ENCODE measurements at regions of chr1 and their contacts with region 1.

Region 1: GRCh38 chr1:182839209-182840065 is at the start of gene DHX9:
- DNase-seq: peak; percentile 55 to 96
- H3K4me3 ChIP-seq: peak within 1 kb of the TSS; percentile 75 to 95
- H3K27ac ChIP-seq: peak within 1 kb of the TSS; percentile 90 to 91
- H3K4me1 ChIP-seq: peaks cover 0 to 10% of the 10 kb centered on the region in 2 donors
- H3K27me3 ChIP-seq: no peaks in the 10 kb centered on the region
- CTCF ChIP-seq: peak in 1 of 3 experiments; percentile 20
- total RNA-seq, gene DHX9: 52.8 TPM

Region 2: DNA sequence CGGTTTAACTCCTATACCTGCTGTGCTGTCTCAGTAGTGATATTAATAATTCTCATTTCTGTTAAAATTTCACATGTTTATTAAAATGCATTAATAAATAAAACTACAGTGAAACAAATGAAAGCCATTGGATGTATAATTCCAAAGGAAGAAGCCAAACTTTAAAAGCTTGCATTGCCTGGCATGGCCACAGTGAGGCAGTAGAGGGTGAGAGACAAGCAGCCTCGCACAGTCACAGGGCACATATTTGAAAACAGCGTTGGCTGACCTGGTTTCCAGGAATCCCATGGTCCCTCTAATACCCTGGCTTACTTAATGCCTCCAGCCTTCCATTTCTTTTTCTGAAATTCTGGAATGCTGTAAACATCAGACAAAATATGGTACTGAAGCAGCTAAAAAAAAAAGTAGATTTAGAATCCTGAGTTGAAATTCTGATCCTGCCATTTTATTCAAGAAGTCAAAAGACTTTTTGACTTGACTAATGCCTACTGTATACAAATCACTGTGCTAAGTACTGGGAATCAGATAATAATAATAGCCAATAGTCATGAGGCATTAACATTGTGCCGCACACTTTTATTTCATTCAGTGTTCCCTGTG is 243.7 kb before region 1 on chr1:
- intact Hi-C with region 1: loop called (anchors 2 kb)
- DNase-seq: peak; percentile 19 to 88
- H3K4me3 ChIP-seq: no peak overlapping the region
- H3K27ac ChIP-seq: peak overlapping the region; percentile 25 to 38
- H3K4me1 ChIP-seq: peaks cover 0 to 4% of the 10 kb centered on the region in 2 donors
- H3K27me3 ChIP-seq: no peaks in the 10 kb centered on the region
- CTCF ChIP-seq: peak; percentile 66 to 86 (median 83)

Region 3: DNA sequence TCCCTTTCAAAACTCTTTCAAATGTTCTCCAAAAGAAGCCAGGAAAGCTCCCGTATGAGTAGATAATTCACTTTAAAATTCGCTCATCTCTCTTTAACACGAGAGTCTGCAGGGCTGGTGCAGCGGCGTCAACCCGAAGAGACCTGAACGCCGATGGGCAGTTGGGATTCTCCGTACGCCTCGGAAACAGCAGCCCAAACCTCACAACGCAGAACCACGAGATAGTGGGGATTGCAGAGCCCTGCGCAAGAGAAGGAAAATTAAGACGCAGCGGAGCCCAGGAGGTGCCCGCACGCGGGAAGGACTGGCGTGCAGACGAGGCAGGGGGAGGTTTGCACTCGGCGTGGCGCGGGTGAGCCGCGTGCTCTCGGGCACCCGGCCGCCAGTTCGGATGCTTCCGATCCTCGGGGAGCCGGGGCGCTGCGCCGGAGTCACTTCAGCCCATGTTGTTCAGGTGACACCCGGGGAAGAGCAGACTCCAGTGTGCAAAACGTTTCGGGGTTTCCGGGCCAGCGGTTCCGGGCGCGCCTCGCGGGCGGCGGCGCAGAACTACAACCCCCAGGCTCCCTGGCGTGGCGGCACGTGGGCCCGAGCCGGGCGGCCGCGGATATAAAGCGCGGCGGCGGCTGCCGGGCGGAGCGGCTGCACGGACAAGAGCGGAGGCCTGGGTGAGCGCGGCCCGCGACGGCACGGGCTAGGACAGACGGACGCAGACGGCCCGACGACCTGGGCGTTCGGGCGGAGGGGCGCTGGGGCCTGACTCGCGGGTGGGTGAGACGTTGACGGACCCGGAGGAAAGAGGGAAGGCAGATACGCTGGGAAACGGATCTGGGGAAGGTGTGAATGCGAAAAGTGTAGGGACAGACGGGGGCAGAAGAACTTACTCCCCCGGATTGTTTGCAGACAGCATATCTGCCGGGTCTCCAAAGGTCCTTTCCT is 50.0 kb before region 1 on chr1 and contains the start of gene NPL:
- intact Hi-C with region 1: loop called (anchors 1 kb)
- DNase-seq: peak; percentile 36 to 90
- H3K4me3 ChIP-seq: peak within 1 kb of the TSS; percentile 61 to 62
- H3K27ac ChIP-seq: peak within 1 kb of the TSS; percentile 16 to 48
- H3K4me1 ChIP-seq: peaks cover 0 to 3% of the 10 kb centered on the region in 2 donors
- H3K27me3 ChIP-seq: no peaks in the 10 kb centered on the region
- CTCF ChIP-seq: no peak
- total RNA-seq, gene NPL: 2.1 TPM

Region 4: DNA sequence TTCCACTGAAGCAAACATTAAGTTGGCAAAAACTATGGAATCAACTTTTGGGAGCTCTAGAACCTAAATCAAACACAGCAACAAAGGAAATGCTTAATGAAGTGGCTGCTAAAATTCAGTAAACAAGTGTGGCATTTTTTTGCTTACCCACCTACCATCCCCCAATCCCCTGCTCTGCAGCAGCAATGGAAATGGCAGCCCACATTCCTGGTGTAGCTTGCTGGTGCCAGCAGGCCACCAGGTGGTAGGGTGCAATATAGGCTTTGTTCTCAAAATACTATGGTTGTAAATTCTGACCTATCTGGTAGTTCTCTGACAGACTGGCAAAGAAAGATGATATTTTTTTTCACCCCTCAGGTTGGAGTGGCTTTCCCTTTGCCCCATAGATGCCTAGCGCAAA is 70.7 kb after region 1 on chr1:
- intact Hi-C with region 1: no loop called
- DNase-seq: no peak
- H3K4me3 ChIP-seq: no peak overlapping the region
- H3K27ac ChIP-seq: no peak overlapping the region
- H3K4me1 ChIP-seq: no peaks in the 10 kb centered on the region
- H3K27me3 ChIP-seq: no peaks in the 10 kb centered on the region
- CTCF ChIP-seq: no peak

Measured in ascending aorta (tissue), 2 donors.